ENCODE measurements at regions of chr20 and their contacts with region 1.

Region 1: DNA sequence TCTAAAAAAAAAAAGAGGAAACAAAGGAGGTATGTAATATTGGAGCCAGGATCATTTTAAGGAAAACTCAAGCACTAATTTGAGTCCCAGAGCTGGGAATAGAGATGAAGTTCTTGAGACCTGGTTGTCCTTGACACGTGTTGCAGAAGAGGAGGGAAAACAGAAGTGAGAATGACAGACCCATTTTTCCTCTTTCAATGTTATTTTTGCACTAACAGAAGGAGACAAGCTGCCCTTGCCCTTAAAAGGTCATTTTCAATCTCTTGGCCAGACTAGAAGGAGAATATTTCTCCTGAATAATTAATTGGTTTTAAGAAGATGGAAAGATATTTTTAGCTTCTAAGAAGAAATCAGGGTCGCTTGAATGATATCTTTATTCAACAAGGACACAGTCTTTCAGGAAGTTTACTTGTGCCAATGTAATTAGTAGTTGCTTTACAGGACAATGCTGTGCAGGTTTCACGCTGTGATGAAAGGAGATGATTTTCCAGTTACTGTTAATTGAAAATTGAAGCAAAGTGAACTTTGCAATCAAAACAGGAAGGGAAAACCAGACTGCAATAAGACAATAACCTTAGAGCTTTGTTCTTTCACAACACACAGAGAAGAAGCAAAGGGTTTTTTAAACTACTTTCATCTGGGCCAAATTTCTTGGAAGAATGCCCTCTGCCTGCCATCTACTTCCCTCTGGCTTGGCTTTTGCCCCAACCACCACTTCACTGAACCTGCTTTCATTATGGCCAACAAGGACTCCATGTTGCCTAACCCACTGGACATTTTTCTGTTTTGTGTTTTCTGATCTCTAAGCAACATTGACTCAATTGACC is 107.8 kb upstream of the SHLD1 start:
- DNase-seq: no peak
- H3K4me3 ChIP-seq: no peak overlapping the region
- H3K27ac ChIP-seq: peak overlapping the region; percentile 65
- H3K4me1 ChIP-seq: peaks cover 57% of the 10 kb centered on the region
- CTCF ChIP-seq: no peak

Region 2: DNA sequence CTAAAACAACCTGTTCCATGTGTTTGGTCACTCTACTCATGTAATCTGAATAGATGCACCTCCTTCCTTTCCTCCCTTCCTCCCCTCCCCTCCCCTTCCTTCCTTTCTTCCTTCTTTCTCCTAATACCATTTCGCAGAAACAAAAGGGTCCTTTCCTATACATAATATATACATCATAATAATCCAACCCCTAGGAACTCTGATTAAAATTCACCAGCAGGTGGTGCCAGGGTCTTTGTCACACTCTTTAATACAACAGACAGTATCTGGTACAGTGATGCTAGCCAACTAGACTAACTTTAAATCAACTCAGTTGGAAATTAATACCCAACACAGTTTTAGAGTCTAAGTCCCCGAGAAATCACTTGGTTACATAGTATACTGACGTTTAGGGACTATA is 73.3 kb before region 1 on chr20:
- CTCF ChIA-PET with region 1: interaction called, 3 read pairs
- POLR2A ChIA-PET with region 1: interaction called, 12 read pairs
- intact Hi-C with region 1: loop called (anchors 2 kb)
- DNase-seq: peak; percentile 83
- H3K4me3 ChIP-seq: no peak overlapping the region
- H3K27ac ChIP-seq: peak overlapping the region; percentile 52
- H3K4me1 ChIP-seq: peaks cover 39% of the 10 kb centered on the region
- CTCF ChIP-seq: peak; percentile 94

Region 3: DNA sequence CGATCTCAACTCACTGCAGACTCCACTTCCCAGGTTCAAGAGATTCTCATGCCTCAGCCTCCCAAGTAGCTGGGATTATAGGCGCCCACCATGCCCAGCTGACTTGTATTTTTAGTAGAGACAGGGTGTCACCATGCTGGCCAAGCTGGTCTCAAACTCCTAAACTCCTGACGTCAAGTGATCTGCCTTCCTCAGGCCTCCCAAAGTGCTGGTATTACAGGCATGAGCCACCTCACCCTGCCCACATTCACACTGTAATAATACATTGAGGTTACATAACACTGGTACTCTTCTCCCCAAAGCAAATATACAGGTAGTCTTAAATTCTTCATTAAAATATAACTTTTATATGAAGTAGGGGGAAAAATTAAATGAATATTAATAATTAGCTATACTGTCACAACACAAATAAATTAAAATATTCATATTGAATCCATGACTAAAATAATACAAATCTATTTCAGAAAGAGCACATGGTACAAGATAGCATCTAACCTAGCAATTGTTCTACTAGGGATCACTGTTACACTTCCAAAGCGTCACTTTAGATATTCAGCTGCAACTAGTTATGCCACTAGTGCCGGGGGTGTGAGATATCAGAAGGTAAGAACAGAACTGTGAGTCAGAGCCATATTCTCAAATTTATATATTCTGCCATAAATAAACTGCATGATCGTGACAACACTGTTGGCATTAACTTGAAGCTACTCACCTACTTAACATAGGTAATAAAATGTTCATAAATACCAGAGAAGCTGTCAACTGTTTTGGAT is 61.2 kb before region 1 on chr20:
- CTCF ChIA-PET with region 1: no interaction called
- POLR2A ChIA-PET with region 1: no interaction called
- intact Hi-C with region 1: no loop called
- DNase-seq: no peak
- H3K4me3 ChIP-seq: no peak overlapping the region
- H3K27ac ChIP-seq: no peak overlapping the region
- H3K4me1 ChIP-seq: peaks cover 28% of the 10 kb centered on the region
- CTCF ChIP-seq: no peak

Region 4: GRCh38 chr20:5658912-5659345 is 16.6 kb after region 1 on chr20:
- CTCF ChIA-PET with region 1: interaction called, 3 read pairs
- POLR2A ChIA-PET with region 1: interaction called, 72 read pairs
- intact Hi-C with region 1: no loop called
- DNase-seq: peak; percentile 92
- H3K4me3 ChIP-seq: peak overlapping the region; percentile 19
- H3K27ac ChIP-seq: peak overlapping the region; percentile 88
- H3K4me1 ChIP-seq: peaks cover 92% of the 10 kb centered on the region
- CTCF ChIP-seq: 0 out of 2 replicates have a peak, but pooled peaks have one; percentile 1

Region 5: DNA sequence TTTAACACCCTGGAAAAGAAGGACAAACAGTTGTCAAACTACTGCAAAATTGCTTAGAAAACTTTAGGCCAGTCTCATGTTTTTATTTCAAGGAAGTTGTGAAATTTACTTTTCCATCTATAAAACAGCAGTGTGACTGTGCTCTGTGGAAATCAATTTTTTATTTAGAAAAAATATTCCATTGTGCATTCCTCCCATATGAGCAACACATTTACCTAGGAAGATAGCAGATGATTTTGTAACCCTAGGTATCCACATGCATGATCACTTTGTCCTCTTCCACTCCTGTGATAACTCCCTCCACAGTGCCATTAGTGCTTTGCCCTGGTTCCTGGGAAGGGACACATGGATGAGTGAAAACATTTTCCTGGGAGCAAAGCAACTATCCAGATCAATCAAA is 37.8 kb after region 1 on chr20:
- CTCF ChIA-PET with region 1: no interaction called
- POLR2A ChIA-PET with region 1: interaction called, 58 read pairs
- intact Hi-C with region 1: no loop called
- DNase-seq: no peak
- H3K4me3 ChIP-seq: no peak overlapping the region
- H3K27ac ChIP-seq: no peak overlapping the region
- H3K4me1 ChIP-seq: peaks cover 63% of the 10 kb centered on the region
- CTCF ChIP-seq: no peak

Region 6: GRCh38 chr20:5770987-5771318 is 128.6 kb after region 1 on chr20:
- CTCF ChIA-PET with region 1: no interaction called
- POLR2A ChIA-PET with region 1: interaction called, 3 read pairs
- intact Hi-C with region 1: loop called (anchors 1 kb)
- DNase-seq: peak; percentile 50
- H3K4me3 ChIP-seq: peak overlapping the region; percentile 33
- H3K27ac ChIP-seq: peak overlapping the region; percentile 80
- H3K4me1 ChIP-seq: peaks cover 63% of the 10 kb centered on the region
- CTCF ChIP-seq: no peak

Region 7: GRCh38 chr20:5844063-5844681 is 201.8 kb after region 1 on chr20:
- CTCF ChIA-PET with region 1: no interaction called
- POLR2A ChIA-PET with region 1: no interaction called
- intact Hi-C with region 1: no loop called
- DNase-seq: no peak
- H3K4me3 ChIP-seq: no peak overlapping the region
- H3K27ac ChIP-seq: no peak overlapping the region
- H3K4me1 ChIP-seq: peaks cover 6% of the 10 kb centered on the region
- CTCF ChIP-seq: no peak

Region 8: DNA sequence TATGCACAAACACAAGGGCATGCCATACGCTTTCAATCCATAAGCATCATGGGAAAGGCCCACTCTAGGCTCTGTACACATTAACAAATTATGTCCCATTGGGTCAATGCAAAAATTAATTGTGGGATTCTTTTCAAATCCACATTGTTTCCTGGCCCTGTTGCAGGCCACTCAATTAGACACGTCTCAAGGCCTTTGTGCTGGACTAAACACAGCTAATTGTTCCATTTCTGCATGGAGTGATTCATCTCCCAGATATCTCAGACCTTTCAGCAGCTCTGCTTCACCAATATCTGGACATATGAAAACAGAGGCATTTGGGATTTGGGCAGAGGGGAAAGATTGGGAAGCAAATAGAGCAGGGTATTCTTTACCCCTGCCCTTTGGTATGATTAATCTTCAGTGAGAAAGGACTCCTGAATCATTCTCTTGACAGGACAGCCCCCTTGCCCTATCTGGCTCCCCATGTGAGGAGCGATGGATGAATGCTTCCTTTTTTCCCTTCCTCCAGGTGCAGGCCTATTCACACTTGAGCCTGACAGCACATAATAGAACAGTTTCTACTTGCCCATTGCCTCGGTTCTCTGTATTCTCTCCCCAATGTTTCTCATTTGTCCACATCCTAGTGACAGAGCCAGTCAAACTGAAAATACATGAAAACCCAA is 1750.3 kb after region 1 on chr20:
- CTCF ChIA-PET with region 1: no interaction called
- POLR2A ChIA-PET with region 1: interaction called, 11 read pairs
- intact Hi-C with region 1: no loop called
- DNase-seq: no peak
- H3K4me3 ChIP-seq: no peak overlapping the region
- H3K27ac ChIP-seq: no peak overlapping the region
- H3K4me1 ChIP-seq: no peaks in the 10 kb centered on the region
- CTCF ChIP-seq: no peak